Common myeloid progenitor, CD34-positive (primary cell): ENCODE measurements at regions of chr3 and their contacts with region 1.

Region 1: GRCh38 chr3:53195602-53196574 is 34.9 kb downstream of the PRKCD start:
- DNase-seq: peak; percentile 50 to 71 (median 67)
- H3K4me3 ChIP-seq: no peak overlapping the region
- H3K27ac ChIP-seq: no peak overlapping the region
- H3K4me1 ChIP-seq: peaks cover 0 to 12% (median 3%) of the 10 kb centered on the region in 4 experiments
- H3K27me3 ChIP-seq: no peaks in the 10 kb centered on the region

Region 2: DNA sequence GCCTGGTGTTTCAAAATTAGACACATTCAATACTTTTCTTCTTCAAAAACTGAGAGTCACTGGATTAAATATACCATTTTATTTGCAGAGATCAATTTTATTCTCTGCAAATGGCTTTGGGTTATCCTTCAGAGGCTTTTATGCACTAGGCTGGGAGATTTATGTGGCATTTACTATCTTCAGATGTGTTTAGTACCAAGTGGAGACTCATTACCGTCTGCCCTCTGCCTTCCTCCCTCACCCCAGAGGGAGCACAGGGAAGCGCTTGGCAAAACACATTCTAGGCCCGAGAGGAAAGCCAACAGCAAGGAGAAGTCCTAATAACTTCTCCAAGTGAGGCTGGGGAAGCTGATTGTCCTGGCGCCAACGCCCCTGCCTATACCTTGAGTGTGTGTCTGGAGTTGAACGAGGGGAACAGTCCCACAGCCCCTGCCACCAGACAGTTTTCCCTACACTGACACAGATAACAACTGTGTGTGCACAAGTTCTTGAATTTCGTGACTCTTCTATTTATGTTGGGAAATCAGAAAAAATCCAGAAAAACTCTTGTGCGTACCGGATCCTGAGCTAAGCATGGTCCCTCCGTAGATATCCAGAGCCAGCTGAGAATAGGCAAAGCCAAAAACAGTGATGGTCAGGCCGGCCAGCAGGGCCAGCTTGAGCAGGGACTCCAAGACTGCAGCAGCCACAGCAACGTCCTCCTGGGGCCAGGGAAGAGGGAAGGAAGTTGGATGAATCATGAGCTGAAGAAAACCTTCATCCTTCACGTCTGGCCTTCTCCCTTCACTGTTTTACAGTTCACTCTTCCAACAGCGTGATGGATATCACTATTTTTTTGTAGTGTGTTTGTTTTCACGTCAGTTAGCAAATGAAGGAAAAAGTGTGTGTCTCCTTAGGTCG is 92.2 kb before region 1 on chr3:
- CTCF ChIA-PET with region 1: interaction called, 117 read pairs
- POLR2A ChIA-PET with region 1: no interaction called
- DNase-seq: no peak
- H3K4me3 ChIP-seq: no peak overlapping the region
- H3K27ac ChIP-seq: no peak overlapping the region
- H3K4me1 ChIP-seq: peaks cover 0 to 14% (median 10%) of the 10 kb centered on the region in 4 experiments
- H3K27me3 ChIP-seq: no peaks in the 10 kb centered on the region

Region 3: GRCh38 chr3:53114011-53114400 is 81.9 kb before region 1 on chr3:
- CTCF ChIA-PET with region 1: interaction called, 117 read pairs
- POLR2A ChIA-PET with region 1: interaction called, 3 read pairs
- DNase-seq: peak; percentile 74 to 87 (median 82)
- H3K4me3 ChIP-seq: no peak overlapping the region
- H3K27ac ChIP-seq: no peak overlapping the region
- H3K4me1 ChIP-seq: peaks cover 0 to 28% (median 8%) of the 10 kb centered on the region in 4 experiments
- H3K27me3 ChIP-seq: no peaks in the 10 kb centered on the region

Region 4: DNA sequence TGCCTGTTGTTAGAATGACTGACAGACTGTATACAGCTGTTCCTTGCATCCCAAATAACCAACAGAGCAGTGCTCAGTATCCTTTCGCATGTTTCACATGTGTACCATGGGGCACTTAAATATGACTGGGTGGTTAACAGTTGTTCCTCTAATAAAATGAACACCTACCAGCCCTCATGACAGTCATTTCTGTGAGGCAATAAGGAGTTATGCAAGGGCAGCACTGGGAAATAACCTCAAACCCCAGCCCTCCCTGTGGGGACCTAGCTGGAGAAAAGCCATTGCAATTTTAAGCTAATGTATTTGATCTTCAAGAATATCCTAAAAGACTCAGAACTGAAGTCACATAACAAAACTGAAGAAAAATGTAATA is 73.0 kb before region 1 on chr3:
- CTCF ChIA-PET with region 1: interaction called, 37 read pairs
- POLR2A ChIA-PET with region 1: no interaction called
- DNase-seq: no peak
- H3K4me3 ChIP-seq: no peak overlapping the region
- H3K27ac ChIP-seq: peak overlapping the region in 1 of 2 experiments; percentile 8
- H3K4me1 ChIP-seq: no peaks in the 10 kb centered on the region
- H3K27me3 ChIP-seq: no peaks in the 10 kb centered on the region

Region 5: GRCh38 chr3:53140847-53141845 is 54.7 kb before region 1 on chr3:
- CTCF ChIA-PET with region 1: interaction called, 125 read pairs
- POLR2A ChIA-PET with region 1: no interaction called
- DNase-seq: peak in 2 of 3 donors; percentile 43 to 45
- H3K4me3 ChIP-seq: no peak overlapping the region
- H3K27ac ChIP-seq: no peak overlapping the region
- H3K4me1 ChIP-seq: peaks cover 5 to 55% (median 8%) of the 10 kb centered on the region in 4 experiments
- H3K27me3 ChIP-seq: no peaks in the 10 kb centered on the region

Region 6: GRCh38 chr3:53250881-53251605 is 55.2 kb after region 1 on chr3:
- CTCF ChIA-PET with region 1: no interaction called
- POLR2A ChIA-PET with region 1: no interaction called
- DNase-seq: no peak
- H3K4me3 ChIP-seq: peak overlapping the region in 2 of 7 experiments; percentile 14 to 27
- H3K27ac ChIP-seq: peak overlapping the region; percentile 74 to 76
- H3K4me1 ChIP-seq: peaks cover 27 to 74% (median 68%) of the 10 kb centered on the region in 4 experiments
- H3K27me3 ChIP-seq: no peaks in the 10 kb centered on the region